ENCODE measurements at regions of chr2 and their contacts with region 1.

Region 1: DNA sequence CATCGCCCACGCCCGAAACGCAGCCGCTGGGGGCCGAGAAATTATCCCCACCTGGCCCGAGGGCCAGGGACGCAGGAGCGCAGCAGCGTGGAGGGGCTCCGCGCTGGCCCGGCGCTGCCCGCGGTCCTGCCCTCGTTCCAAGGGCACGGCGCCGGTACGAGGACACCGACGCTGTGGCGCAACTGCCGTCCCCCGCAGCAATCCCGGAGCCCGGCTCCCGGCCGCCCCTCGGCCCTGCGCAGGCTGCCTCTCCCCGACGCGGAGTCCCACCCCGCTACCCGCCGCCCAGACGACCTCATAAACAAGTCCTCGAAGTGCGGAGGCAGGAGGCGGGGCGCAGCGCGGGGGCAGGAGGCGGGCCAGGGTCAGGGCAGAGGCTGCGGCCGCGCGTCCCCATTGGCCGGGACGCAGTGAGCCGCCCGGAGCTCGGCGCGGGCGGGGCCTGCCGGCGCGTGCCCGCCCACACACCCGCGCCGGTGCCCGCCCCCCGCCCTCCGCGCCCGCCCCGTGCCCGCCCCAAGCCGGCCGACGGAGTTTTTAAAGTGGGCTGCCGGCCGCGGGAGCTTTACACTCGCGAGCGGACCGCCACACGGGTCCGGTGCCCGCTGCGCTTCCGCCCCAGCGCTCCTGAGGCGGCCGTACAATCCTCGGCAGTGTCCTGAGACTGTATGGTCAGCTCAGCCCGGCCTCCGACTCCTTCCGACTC is at the start of gene EPAS1:
- DNase-seq: peak; percentile 96
- H3K4me3 ChIP-seq: peak within 1 kb of the TSS; percentile 62 to 81 (median 72)
- H3K27ac ChIP-seq: peak within 1 kb of the TSS; percentile 88 to 93 (median 90)
- H3K4me1 ChIP-seq: peaks cover 0 to 31% (median 16%) of the 10 kb centered on the region in 4 donors
- H3K27me3 ChIP-seq: no peaks in the 10 kb centered on the region
- CTCF ChIP-seq: no peak
- EP300 ChIP-seq: no peak
- POLR2A ChIP-seq: peak; percentile 45 to 53
- total RNA-seq, gene EPAS1: 56.8 to 97.8 (median 61.1) TPM

Region 2: GRCh38 chr2:46010925-46011490 is 286.0 kb before region 1 on chr2:
- intact Hi-C with region 1: loop called (anchors 5 kb)
- DNase-seq: no peak
- H3K4me3 ChIP-seq: no peak overlapping the region
- H3K27ac ChIP-seq: no peak overlapping the region
- H3K4me1 ChIP-seq: no peaks in the 10 kb centered on the region
- H3K27me3 ChIP-seq: no peaks in the 10 kb centered on the region
- CTCF ChIP-seq: peak in 3 of 4 experiments; percentile 53 to 57 (median 53)
- EP300 ChIP-seq: no peak
- POLR2A ChIP-seq: no peak

Region 3: GRCh38 chr2:46062637-46063412 is 234.2 kb before region 1 on chr2:
- intact Hi-C with region 1: loop called (anchors 5 kb)
- DNase-seq: peak; percentile 92
- H3K4me3 ChIP-seq: no peak overlapping the region
- H3K27ac ChIP-seq: peak overlapping the region in 2 of 4 donors; percentile 30 to 47
- H3K4me1 ChIP-seq: peaks cover 0 to 6% (median 3%) of the 10 kb centered on the region in 4 donors
- H3K27me3 ChIP-seq: no peaks in the 10 kb centered on the region
- CTCF ChIP-seq: peak; percentile 74 to 93 (median 84)
- EP300 ChIP-seq: no peak
- POLR2A ChIP-seq: no peak

Region 4: DNA sequence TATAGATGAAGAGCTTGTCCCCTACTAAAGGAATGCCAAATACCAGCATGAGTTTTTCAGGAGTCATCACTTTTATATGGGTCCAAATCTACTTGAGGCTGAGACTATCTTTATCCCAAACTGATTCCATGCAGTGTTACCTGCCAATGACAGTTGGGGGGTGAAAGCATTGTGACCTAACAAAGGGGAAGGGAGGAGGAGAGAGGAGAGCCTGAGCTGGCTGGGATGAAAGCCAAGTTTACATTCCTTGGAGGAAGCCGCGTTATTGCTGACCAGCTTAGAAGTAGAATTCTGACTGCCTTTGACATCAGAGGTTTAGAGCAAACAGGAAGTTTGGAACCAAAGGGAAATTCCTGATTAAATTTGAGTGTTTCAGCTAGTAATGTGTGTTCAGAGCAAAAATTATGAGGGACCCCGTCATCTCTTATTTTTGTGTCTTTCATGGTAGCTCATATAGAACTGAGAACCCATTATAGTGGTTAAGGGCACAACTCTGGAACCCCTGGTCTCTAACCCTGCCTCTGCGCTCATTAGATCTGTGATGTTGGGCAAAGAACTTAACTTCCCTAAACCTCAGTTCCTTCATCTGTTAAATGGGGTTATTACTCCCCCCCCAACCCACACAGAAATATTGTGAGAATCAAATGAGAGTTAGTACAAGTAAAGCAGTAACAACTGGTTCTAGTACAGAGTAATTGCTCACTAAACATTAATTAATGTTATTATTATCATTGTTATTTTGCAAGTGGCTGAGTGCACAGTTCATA is 199.1 kb before region 1 on chr2:
- intact Hi-C with region 1: loop called (anchors 10 kb)
- DNase-seq: peak; percentile 90
- H3K4me3 ChIP-seq: no peak overlapping the region
- H3K27ac ChIP-seq: peak overlapping the region; percentile 64 to 78 (median 72)
- H3K4me1 ChIP-seq: peaks cover 0 to 26% (median 21%) of the 10 kb centered on the region in 4 donors
- H3K27me3 ChIP-seq: no peaks in the 10 kb centered on the region
- CTCF ChIP-seq: no peak
- EP300 ChIP-seq: peak in 2 of 4 donors; percentile 42 to 77
- POLR2A ChIP-seq: no peak

Region 5: GRCh38 chr2:46187112-46187618 is 109.8 kb before region 1 on chr2:
- intact Hi-C with region 1: loop called (anchors 5 kb)
- DNase-seq: peak; percentile 83
- H3K4me3 ChIP-seq: peak overlapping the region in 3 of 4 donors; percentile 13 to 34 (median 28)
- H3K27ac ChIP-seq: peak overlapping the region; percentile 61 to 86 (median 82)
- H3K4me1 ChIP-seq: peaks cover 0 to 29% (median 25%) of the 10 kb centered on the region in 4 donors
- H3K27me3 ChIP-seq: no peaks in the 10 kb centered on the region
- CTCF ChIP-seq: no peak
- EP300 ChIP-seq: no peak
- POLR2A ChIP-seq: no peak

Region 6: DNA sequence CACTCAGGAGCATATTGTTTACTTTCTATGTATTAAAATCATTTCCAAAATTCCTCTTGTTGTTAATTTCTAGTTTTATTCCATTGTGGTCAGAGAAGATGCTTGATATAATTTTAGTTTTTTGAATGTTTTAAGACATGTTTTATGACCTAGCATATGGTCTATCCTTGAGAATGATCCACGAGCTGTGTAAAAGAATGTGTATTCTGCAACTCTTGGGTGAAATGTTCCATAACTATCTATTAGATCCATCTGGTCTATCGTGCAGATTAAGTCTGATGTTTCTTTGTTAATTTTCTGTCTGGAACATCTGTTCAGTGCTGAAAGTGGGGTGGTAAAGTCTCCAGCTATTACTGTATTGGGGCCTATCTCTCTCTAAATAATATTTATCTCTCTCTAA is 83.1 kb before region 1 on chr2:
- intact Hi-C with region 1: no loop called
- DNase-seq: no peak
- H3K4me3 ChIP-seq: no peak overlapping the region
- H3K27ac ChIP-seq: no peak overlapping the region
- H3K4me1 ChIP-seq: no peaks in the 10 kb centered on the region
- H3K27me3 ChIP-seq: no peaks in the 10 kb centered on the region
- CTCF ChIP-seq: no peak
- EP300 ChIP-seq: no peak
- POLR2A ChIP-seq: no peak

Region 7: GRCh38 chr2:46275973-46276372 is 21.0 kb before region 1 on chr2:
- intact Hi-C with region 1: no loop called
- DNase-seq: peak; percentile 74
- H3K4me3 ChIP-seq: no peak overlapping the region
- H3K27ac ChIP-seq: peak overlapping the region in 3 of 4 donors; percentile 11 to 39 (median 36)
- H3K4me1 ChIP-seq: no peaks in the 10 kb centered on the region
- H3K27me3 ChIP-seq: no peaks in the 10 kb centered on the region
- CTCF ChIP-seq: no peak
- EP300 ChIP-seq: peak in 1 of 4 donors; percentile 30
- POLR2A ChIP-seq: no peak

Region 8: GRCh38 chr2:46325178-46325928 is 28.4 kb after region 1 on chr2:
- intact Hi-C with region 1: no loop called
- DNase-seq: no peak
- H3K4me3 ChIP-seq: no peak overlapping the region
- H3K27ac ChIP-seq: no peak overlapping the region
- H3K4me1 ChIP-seq: peaks cover 0 to 34% (median 17%) of the 10 kb centered on the region in 4 donors
- H3K27me3 ChIP-seq: no peaks in the 10 kb centered on the region
- CTCF ChIP-seq: no peak
- EP300 ChIP-seq: no peak
- POLR2A ChIP-seq: no peak

Region 9: GRCh38 chr2:46335391-46336282 is 38.6 kb after region 1 on chr2:
- intact Hi-C with region 1: loop called (anchors 1 kb)
- DNase-seq: peak; percentile 80
- H3K4me3 ChIP-seq: peak overlapping the region; percentile 9 to 35 (median 27)
- H3K27ac ChIP-seq: peak overlapping the region; percentile 58 to 82 (median 78)
- H3K4me1 ChIP-seq: peaks cover 0 to 68% (median 61%) of the 10 kb centered on the region in 4 donors
- H3K27me3 ChIP-seq: no peaks in the 10 kb centered on the region
- CTCF ChIP-seq: no peak
- EP300 ChIP-seq: no peak
- POLR2A ChIP-seq: no peak

Region 10: DNA sequence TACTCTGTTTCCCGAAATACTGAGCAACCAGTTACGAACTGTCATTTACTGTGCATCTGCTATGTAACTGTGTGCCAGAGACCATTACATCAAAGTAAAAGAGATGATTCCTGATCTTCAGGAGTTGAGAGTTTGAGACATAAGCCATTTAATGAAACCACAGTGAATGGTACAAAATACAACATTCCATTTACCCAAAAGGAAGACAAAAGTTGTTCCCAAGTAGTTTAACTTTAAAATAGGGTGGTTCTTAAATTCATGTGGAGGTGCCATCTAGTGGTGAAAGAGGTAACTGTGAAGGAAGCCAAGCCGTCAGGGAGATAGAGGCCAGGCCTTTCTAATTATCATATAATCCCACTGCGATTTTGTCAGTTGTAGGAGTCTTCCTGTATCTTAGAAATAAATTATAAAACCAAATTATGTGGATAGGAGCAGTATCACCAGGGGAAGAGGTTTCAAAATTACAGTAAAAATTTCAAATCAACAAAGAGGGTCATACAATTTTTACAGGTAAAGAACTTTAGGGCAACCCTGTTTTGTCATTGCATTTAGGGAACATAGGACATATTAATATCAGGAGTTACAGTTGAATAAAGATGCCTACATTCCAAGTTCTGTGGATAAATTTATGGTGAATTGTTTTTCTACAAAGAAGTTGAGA is 67.9 kb after region 1 on chr2:
- intact Hi-C with region 1: loop called (anchors 2 kb)
- DNase-seq: no peak
- H3K4me3 ChIP-seq: no peak overlapping the region
- H3K27ac ChIP-seq: peak overlapping the region in 1 of 4 donors; percentile 13
- H3K4me1 ChIP-seq: peaks cover 0 to 14% (median 11%) of the 10 kb centered on the region in 4 donors
- H3K27me3 ChIP-seq: no peaks in the 10 kb centered on the region
- CTCF ChIP-seq: peak; percentile 48 to 84 (median 83)
- EP300 ChIP-seq: no peak
- POLR2A ChIP-seq: no peak

Region 11: GRCh38 chr2:46431481-46432205 is 134.7 kb after region 1 on chr2:
- intact Hi-C with region 1: no loop called
- DNase-seq: no peak
- H3K4me3 ChIP-seq: no peak overlapping the region
- H3K27ac ChIP-seq: no peak overlapping the region
- H3K4me1 ChIP-seq: no peaks in the 10 kb centered on the region
- H3K27me3 ChIP-seq: no peaks in the 10 kb centered on the region
- CTCF ChIP-seq: no peak
- EP300 ChIP-seq: no peak
- POLR2A ChIP-seq: no peak

Measured in sigmoid colon (tissue), 7 donors.